Naive thymus-derived CD4-positive, alpha-beta T cell (primary cell): ENCODE measurements at regions of chr2 and their contacts with region 1.

Region 1: GRCh38 chr2:84735389-84735788 is 145.5 kb downstream of the TRABD2A start:
- DNase-seq: no peak
- ATAC-seq: no peak
- H3K4me3 ChIP-seq: no peak overlapping the region
- H3K4me3 Mint-ChIP-seq: no peak overlapping the region
- H3K27ac ChIP-seq: no peak overlapping the region
- H3K27ac Mint-ChIP-seq: no peak overlapping the region
- H3K4me1 ChIP-seq: peaks cover 0 to 6% of the 10 kb centered on the region in 2 donors
- H3K4me1 Mint-ChIP-seq: peaks cover 2 to 76% (median 56%) of the 10 kb centered on the region in 7 donors
- H3K27me3 ChIP-seq: no peaks in the 10 kb centered on the region
- H3K27me3 Mint-ChIP-seq: peaks cover 0 to 19% (median 0%) of the 10 kb centered on the region in 5 donors

Region 2: GRCh38 chr2:84619794-84620371 is 115.5 kb before region 1 on chr2:
- CTCF ChIA-PET with region 1: no interaction called
- POLR2A ChIA-PET with region 1: no interaction called
- intact Hi-C with region 1: no loop called
- DNase-seq: no peak
- ATAC-seq: no peak
- H3K4me3 ChIP-seq: no peak overlapping the region
- H3K4me3 Mint-ChIP-seq: no peak overlapping the region
- H3K27ac ChIP-seq: no peak overlapping the region
- H3K27ac Mint-ChIP-seq: peak overlapping the region in 1 of 9 donors; percentile 70
- H3K4me1 ChIP-seq: no peaks in the 10 kb centered on the region
- H3K4me1 Mint-ChIP-seq: peaks cover 0 to 4% (median 0%) of the 10 kb centered on the region in 7 donors
- H3K27me3 ChIP-seq: no peaks in the 10 kb centered on the region
- H3K27me3 Mint-ChIP-seq: peaks cover 0 to 2% (median 0%) of the 10 kb centered on the region in 5 donors

Region 3: DNA sequence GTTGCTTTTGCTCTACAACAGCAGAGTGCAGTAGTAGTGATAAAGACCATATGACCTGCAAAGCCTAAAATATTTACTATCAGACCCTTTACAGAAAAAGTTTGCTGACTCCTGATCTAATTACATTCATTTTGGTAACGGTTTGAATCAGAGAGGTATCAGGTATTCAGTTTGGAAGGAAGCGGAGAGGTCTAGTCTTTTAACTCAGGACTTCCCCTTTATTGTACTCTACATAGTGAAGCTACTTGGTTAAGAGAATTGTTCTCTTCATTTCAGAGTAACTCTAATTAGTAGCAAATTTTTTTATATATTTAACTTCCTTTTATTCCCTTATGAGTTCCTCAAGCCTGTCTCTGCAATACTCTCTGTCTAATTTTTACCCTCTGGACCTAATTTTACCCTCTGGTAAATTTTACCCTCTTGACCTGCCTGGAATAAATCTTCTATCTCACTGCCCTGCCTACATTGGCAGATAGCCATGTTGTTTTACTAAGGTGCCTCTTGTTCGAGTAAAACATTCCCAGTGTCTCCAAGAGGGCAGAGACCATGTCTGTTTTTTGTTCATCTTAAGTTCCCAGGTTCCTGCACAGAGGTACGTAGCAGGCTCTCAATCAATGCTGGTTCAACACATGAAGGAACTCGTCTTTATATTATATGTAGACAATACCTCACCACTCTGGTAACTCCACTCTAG is 48.5 kb before region 1 on chr2:
- CTCF ChIA-PET with region 1: no interaction called
- POLR2A ChIA-PET with region 1: interaction called, 12 read pairs
- intact Hi-C with region 1: no loop called
- DNase-seq: peak in 5 of 9 donors; percentile 21 to 43 (median 35)
- ATAC-seq: peak; percentile 76
- H3K4me3 ChIP-seq: no peak overlapping the region
- H3K4me3 Mint-ChIP-seq: peak overlapping the region in 8 of 10 donors; percentile 54 to 79 (median 65)
- H3K27ac ChIP-seq: peak overlapping the region; percentile 32
- H3K27ac Mint-ChIP-seq: peak overlapping the region in 8 of 9 donors; percentile 64 to 95 (median 92)
- H3K4me1 ChIP-seq: peaks cover 0 to 24% of the 10 kb centered on the region in 2 donors
- H3K4me1 Mint-ChIP-seq: peaks cover 5 to 81% (median 71%) of the 10 kb centered on the region in 7 donors
- H3K27me3 ChIP-seq: no peaks in the 10 kb centered on the region
- H3K27me3 Mint-ChIP-seq: no peaks in the 10 kb centered on the region

Region 4: GRCh38 chr2:84716564-84716963 is 18.8 kb before region 1 on chr2:
- CTCF ChIA-PET with region 1: no interaction called
- POLR2A ChIA-PET with region 1: interaction called, 3 read pairs
- intact Hi-C with region 1: loop called in 1 of 2 experiments (anchors 2 kb)
- DNase-seq: no peak
- ATAC-seq: peak; percentile 14
- H3K4me3 ChIP-seq: no peak overlapping the region
- H3K4me3 Mint-ChIP-seq: peak overlapping the region in 8 of 10 donors; percentile 8 to 80 (median 64)
- H3K27ac ChIP-seq: peak overlapping the region; percentile 58
- H3K27ac Mint-ChIP-seq: peak overlapping the region in 8 of 9 donors; percentile 82 to 98 (median 88)
- H3K4me1 ChIP-seq: peaks cover 0 to 19% of the 10 kb centered on the region in 2 donors
- H3K4me1 Mint-ChIP-seq: peaks cover 11 to 69% (median 55%) of the 10 kb centered on the region in 7 donors
- H3K27me3 ChIP-seq: no peaks in the 10 kb centered on the region
- H3K27me3 Mint-ChIP-seq: no peaks in the 10 kb centered on the region